ENCODE measurements at regions of chr6 and their contacts with region 1.

Region 1: GRCh38 chr6:85678602-85679444 is 36.1 kb upstream of the SYNCRIP start:
- DNase-seq: peak; percentile 97
- H3K4me3 ChIP-seq: peak overlapping the region; percentile 75
- H3K27ac ChIP-seq: peak overlapping the region; percentile 97
- H3K27me3 ChIP-seq: no peaks in the 10 kb centered on the region
- CTCF ChIP-seq: 0 out of 2 replicates have a peak, but pooled peaks have one; percentile 8

Region 2: GRCh38 chr6:85593438-85594196 is 85.2 kb before region 1 on chr6 and contains the start of gene SNX14:
- CTCF ChIA-PET with region 1: interaction called, 3 read pairs
- POLR2A ChIA-PET with region 1: interaction called, 36 read pairs
- DNase-seq: peak; percentile 88
- H3K4me3 ChIP-seq: peak within 1 kb of the TSS; percentile 91
- H3K27ac ChIP-seq: peak within 1 kb of the TSS; percentile 90
- H3K27me3 ChIP-seq: no peaks in the 10 kb centered on the region
- CTCF ChIP-seq: no peak
- polyA plus RNA-seq, gene SNX14: 77.0 and 114 TPM in 2 replicates

Region 3: DNA sequence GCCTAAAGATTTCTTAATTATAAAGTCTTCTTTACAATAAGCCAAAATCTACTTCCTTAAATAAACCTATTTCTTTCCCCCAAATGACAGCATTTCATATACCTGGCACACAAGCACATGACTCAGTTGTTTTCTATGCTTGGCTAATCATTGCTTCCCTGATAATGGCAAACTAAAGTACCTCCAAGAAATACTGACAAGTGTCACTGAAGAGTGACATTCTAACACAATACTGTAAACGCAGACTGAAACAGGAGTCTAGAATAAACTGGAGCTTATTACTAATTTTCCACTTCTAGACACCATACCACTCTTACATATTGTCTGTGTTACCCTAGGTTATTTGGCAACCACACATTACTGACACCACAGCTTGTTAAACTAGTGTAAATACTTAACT is 50.5 kb before region 1 on chr6:
- CTCF ChIA-PET with region 1: no interaction called
- POLR2A ChIA-PET with region 1: interaction called, 18 read pairs
- DNase-seq: no peak
- H3K4me3 ChIP-seq: no peak overlapping the region
- H3K27ac ChIP-seq: no peak overlapping the region
- H3K27me3 ChIP-seq: no peaks in the 10 kb centered on the region
- CTCF ChIP-seq: no peak

Region 4: DNA sequence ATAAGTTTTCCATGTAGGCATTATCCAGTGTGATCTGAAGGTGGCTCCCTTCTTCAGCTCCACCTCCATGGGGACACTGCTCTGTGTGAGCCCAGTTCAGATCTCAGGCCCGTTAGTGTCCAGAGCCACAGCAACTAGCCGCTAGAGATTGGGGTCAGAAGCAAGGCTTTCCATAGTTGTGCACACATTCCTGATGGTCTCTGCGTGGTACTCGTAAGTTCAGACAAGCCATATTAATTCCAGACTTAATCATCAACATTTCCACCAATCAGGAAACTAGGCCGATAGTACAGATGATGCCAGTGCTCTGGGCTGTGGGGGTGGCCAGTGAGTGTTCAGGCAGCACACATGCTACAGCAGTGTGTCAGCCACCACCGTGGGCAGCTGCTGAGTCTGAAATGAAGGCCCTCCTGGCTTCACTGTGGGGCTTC is 18.6 kb before region 1 on chr6:
- CTCF ChIA-PET with region 1: no interaction called
- POLR2A ChIA-PET with region 1: interaction called, 27 read pairs
- DNase-seq: peak; percentile 82
- H3K4me3 ChIP-seq: peak overlapping the region; percentile 43
- H3K27ac ChIP-seq: peak overlapping the region; percentile 87
- H3K27me3 ChIP-seq: no peaks in the 10 kb centered on the region
- CTCF ChIP-seq: peak; percentile 42

Region 5: GRCh38 chr6:85865420-85866369 is 186.9 kb after region 1 on chr6:
- CTCF ChIA-PET with region 1: no interaction called
- POLR2A ChIA-PET with region 1: interaction called, 10 read pairs
- DNase-seq: no peak
- H3K4me3 ChIP-seq: peak overlapping the region; percentile 59
- H3K27ac ChIP-seq: peak overlapping the region; percentile 61
- H3K27me3 ChIP-seq: no peaks in the 10 kb centered on the region
- CTCF ChIP-seq: no peak

Measured in AG04450 (cell line).